ENCODE measurements at regions of chr5 and their contacts with region 1.

Region 1: DNA sequence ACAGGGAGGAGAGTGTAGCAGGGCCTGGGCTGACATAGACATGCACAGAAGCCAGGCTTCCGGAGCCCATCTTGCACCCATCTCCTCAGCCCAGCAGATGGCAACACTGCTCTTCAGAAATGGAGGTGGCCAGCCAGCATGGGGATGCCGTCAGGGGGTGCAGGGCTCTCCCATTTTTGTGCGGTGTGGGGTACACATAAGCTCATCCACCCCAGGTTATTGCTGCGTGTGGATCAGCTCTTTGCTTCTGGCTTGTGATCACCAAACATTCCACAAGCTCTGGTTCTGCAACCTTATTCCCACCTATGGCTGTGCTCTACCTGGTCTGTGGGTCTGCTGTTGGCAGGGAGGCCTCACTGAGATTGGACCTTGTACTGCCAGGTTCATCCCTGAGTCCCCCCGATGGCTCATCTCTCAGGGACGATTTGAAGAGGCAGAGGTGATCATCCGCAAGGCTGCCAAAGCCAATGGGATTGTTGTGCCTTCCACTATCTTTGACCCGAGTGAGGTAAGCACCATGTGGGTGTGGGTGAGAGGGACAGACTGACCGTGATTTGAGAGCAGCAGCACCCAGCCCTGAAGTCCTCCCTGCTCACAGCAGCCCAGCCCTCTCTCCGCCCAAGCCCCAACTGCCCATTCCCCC is 17.3 kb downstream of the SLC22A5 start:
- DNase-seq: peak; percentile 79
- ATAC-seq: peak; percentile 90
- H3K4me3 Mint-ChIP-seq: peak overlapping the region; percentile 12
- H3K27ac Mint-ChIP-seq: peak overlapping the region; percentile 69
- H3K4me1 Mint-ChIP-seq: peaks cover 40% of the 10 kb centered on the region
- H3K27me3 Mint-ChIP-seq: no peaks in the 10 kb centered on the region

Region 2: GRCh38 chr5:132369474-132370180 is 17.1 kb before region 1 on chr5 and contains the start of gene SLC22A5:
- POLR2A ChIA-PET with region 1: no interaction called
- DNase-seq: peak; percentile 88
- ATAC-seq: peak; percentile 96
- H3K4me3 Mint-ChIP-seq: peak within 1 kb of the TSS; percentile 83
- H3K27ac Mint-ChIP-seq: peak within 1 kb of the TSS; percentile 71
- H3K4me1 Mint-ChIP-seq: peaks cover 17% of the 10 kb centered on the region
- H3K27me3 Mint-ChIP-seq: no peaks in the 10 kb centered on the region
- total RNA-seq, gene SLC22A5: 5.1 to 6.0 TPM

Region 3: GRCh38 chr5:132418881-132419280 is 32.1 kb after region 1 on chr5:
- POLR2A ChIA-PET with region 1: no interaction called
- DNase-seq: no peak
- ATAC-seq: no peak
- H3K4me3 Mint-ChIP-seq: no peak overlapping the region
- H3K27ac Mint-ChIP-seq: peak overlapping the region; percentile 94
- H3K4me1 Mint-ChIP-seq: peaks cover 76% of the 10 kb centered on the region
- H3K27me3 Mint-ChIP-seq: no peaks in the 10 kb centered on the region

Region 4: DNA sequence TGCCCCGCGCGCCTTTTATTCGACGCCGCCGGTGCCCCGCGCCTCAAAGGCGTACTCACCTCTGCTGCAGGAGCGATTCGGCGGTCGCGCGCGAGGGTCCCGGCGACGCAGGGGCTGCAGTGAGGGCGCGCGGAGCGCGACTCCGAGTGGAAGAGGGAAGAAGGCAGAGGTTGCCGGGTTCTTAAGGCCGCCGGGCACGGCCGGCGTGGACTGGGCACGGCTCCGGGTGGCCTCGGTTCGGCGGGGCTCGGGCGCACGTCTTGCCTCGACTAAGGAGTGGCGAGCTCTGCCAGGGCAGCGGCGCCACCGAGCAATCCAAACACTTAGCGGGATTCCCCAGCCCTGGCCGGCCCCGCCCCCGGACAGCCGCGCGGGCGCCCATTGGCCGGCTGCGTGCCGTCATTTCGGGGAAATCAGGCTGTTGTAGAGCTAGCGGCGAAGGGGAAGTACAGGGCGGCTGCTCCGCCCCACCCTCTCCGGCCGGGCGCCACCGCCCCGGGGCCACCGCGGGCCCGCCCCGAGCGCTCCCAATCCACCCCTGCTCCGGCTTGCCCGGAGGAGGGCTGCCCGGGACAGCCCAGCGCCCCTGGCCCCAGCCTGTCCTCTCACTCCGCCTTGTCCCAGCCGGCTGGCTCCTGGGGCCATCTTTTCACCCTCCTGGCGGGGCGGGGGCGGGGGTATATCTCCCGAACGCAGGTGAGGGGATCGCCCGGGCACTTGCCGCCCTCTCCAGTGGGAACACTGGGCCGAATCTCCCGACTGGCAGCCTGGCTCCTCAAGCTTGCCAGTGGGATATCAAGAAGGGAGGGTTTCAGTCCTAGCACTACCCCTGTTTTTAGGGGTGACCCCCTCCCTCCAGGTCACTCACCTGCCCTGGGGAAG is 104.0 kb after region 1 on chr5 and contains the start of gene IRF1:
- POLR2A ChIA-PET with region 1: interaction called, 23 read pairs
- DNase-seq: peak; percentile 99
- ATAC-seq: peak; percentile 78
- H3K4me3 Mint-ChIP-seq: peak within 1 kb of the TSS; percentile 98
- H3K27ac Mint-ChIP-seq: peak within 1 kb of the TSS; percentile 92
- H3K4me1 Mint-ChIP-seq: peaks cover 63% of the 10 kb centered on the region
- H3K27me3 Mint-ChIP-seq: no peaks in the 10 kb centered on the region
- total RNA-seq, gene IRF1: 228 to 238 TPM

Region 5: GRCh38 chr5:132495667-132496190 is 109.0 kb after region 1 on chr5:
- POLR2A ChIA-PET with region 1: interaction called, 23 read pairs
- DNase-seq: peak; percentile 82
- ATAC-seq: peak; percentile 57
- H3K4me3 Mint-ChIP-seq: peak overlapping the region; percentile 87
- H3K27ac Mint-ChIP-seq: peak overlapping the region; percentile 99
- H3K4me1 Mint-ChIP-seq: peaks cover 61% of the 10 kb centered on the region
- H3K27me3 Mint-ChIP-seq: no peaks in the 10 kb centered on the region

Region 6: GRCh38 chr5:132500931-132501630 is 114.3 kb after region 1 on chr5:
- POLR2A ChIA-PET with region 1: interaction called, 23 read pairs
- DNase-seq: peak; percentile 72
- ATAC-seq: peak; percentile 20
- H3K4me3 Mint-ChIP-seq: no peak overlapping the region
- H3K27ac Mint-ChIP-seq: peak overlapping the region; percentile 63
- H3K4me1 Mint-ChIP-seq: peaks cover 32% of the 10 kb centered on the region
- H3K27me3 Mint-ChIP-seq: no peaks in the 10 kb centered on the region

Measured in activated naive CD8-positive, alpha-beta T cell treated with anti-CD3 and anti-CD28 coated beads, Interleukin-2, amount 10 ng/mL, durations not matched to agents 7 days and 5 days (primary cell).